Activated CD4-positive, alpha-beta memory T cell treated with anti-CD3 and anti-CD28 coated beads, Interleukin-2, amount 10 ng/mL, durations not matched to agents 7 days and 5 days (primary cell): ENCODE measurements at regions of chr2 and their contacts with region 1.

Region 1: GRCh38 chr2:7097348-7097895 is 180.2 kb downstream of the RNF144A start:
- DNase-seq: peak; percentile 78
- H3K4me3 Mint-ChIP-seq: peak overlapping the region; percentile 39
- H3K27ac Mint-ChIP-seq: no peak overlapping the region
- H3K4me1 Mint-ChIP-seq: peaks cover 8% of the 10 kb centered on the region
- H3K27me3 Mint-ChIP-seq: no peaks in the 10 kb centered on the region

Region 2: GRCh38 chr2:7111626-7112025 is 14.2 kb after region 1 on chr2:
- CTCF ChIA-PET with region 1: interaction called, 18 read pairs
- POLR2A ChIA-PET with region 1: no interaction called
- DNase-seq: no peak
- H3K4me3 Mint-ChIP-seq: no peak overlapping the region
- H3K27ac Mint-ChIP-seq: no peak overlapping the region
- H3K4me1 Mint-ChIP-seq: no peaks in the 10 kb centered on the region
- H3K27me3 Mint-ChIP-seq: no peaks in the 10 kb centered on the region

Region 3: GRCh38 chr2:7140306-7140705 is 42.9 kb after region 1 on chr2:
- CTCF ChIA-PET with region 1: no interaction called
- POLR2A ChIA-PET with region 1: no interaction called
- DNase-seq: no peak
- H3K4me3 Mint-ChIP-seq: no peak overlapping the region
- H3K27ac Mint-ChIP-seq: no peak overlapping the region
- H3K4me1 Mint-ChIP-seq: no peaks in the 10 kb centered on the region
- H3K27me3 Mint-ChIP-seq: peaks cover 11% of the 10 kb centered on the region